B cell (primary cell): ENCODE measurements at regions of chr12 and their contacts with region 1.

Region 1: DNA sequence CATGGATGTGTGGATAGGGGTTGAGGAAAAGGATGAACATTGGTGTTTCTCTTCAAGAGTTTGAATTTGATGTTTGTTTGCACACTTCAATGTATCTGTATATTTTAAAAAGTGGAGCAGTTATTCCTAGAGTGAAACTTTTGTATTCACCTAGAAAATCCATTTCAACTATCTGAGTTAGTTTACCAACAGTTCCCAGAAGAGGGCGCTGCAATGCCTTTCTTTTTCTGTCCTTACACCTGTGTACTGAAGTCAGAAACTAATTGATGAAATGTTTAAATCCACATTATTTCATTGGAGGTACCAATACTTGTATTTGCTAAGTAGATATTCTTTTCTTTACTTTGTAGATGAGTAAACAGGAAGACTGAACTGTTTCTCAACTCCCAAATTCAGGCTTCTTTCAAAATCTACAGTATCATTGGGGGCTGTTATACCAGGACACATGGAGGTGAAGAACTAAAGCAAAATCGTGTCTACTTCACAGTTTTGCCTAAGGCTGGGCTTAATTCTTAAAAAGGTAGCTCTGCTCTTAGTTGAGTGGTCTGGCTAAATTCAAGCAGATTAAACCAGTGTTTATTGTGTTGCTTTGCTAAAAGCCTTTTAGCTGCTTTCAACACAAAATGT is 26.6 kb upstream of the KLRB1 start:
- DNase-seq: peak; percentile 86
- ATAC-seq: peak; percentile 75
- H3K4me3 ChIP-seq: no peak overlapping the region
- H3K4me3 Mint-ChIP-seq: peak overlapping the region; percentile 72
- H3K27ac ChIP-seq: peak overlapping the region; percentile 1 to 82
- H3K27ac Mint-ChIP-seq: peak overlapping the region; percentile 83
- H3K4me1 ChIP-seq: peaks cover 48 to 53% of the 10 kb centered on the region in 2 donors
- H3K4me1 Mint-ChIP-seq: peaks cover 59% of the 10 kb centered on the region
- H3K27me3 ChIP-seq: no peaks in the 10 kb centered on the region
- H3K27me3 Mint-ChIP-seq: no peaks in the 10 kb centered on the region
- CTCF ChIP-seq: peak; percentile 92

Region 2: DNA sequence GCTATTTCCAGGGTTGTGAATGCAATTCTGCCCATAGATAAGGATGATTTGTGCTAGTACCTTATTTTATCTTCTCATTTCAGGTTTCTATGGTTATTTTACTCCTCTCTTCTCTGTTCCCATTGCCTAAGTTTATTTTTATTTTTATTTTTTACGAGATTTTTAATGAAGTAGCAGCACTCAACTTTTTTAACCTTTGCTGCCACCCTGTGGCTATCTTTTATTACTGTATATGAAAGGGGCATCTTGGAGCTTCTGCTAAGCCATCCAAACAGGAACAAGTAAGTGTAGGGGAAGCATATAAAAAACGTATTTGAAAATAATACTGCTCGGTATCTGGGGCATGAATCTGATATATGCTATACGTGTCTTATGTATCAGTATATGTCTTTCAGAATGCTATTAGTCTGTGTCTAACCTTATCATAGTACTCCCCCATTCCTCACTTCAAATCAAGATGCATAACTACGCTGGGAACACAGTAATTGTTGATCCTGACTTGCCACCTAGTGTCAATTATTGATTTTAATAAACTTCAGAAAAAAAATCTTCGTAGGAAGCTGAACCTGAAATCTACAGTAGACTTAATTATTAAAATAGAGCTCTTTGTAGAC is 584.7 kb before region 1 on chr12:
- CTCF ChIA-PET with region 1: no interaction called
- POLR2A ChIA-PET with region 1: no interaction called
- intact Hi-C with region 1: no loop called
- DNase-seq: peak; percentile 53
- ATAC-seq: peak; percentile 41
- H3K4me3 ChIP-seq: no peak overlapping the region
- H3K4me3 Mint-ChIP-seq: no peak overlapping the region
- H3K27ac ChIP-seq: no peak overlapping the region
- H3K27ac Mint-ChIP-seq: no peak overlapping the region
- H3K4me1 ChIP-seq: no peaks in the 10 kb centered on the region
- H3K4me1 Mint-ChIP-seq: no peaks in the 10 kb centered on the region
- H3K27me3 ChIP-seq: no peaks in the 10 kb centered on the region
- H3K27me3 Mint-ChIP-seq: peaks cover 10% of the 10 kb centered on the region
- CTCF ChIP-seq: peak; percentile 75

Region 3: GRCh38 chr12:9391815-9392214 is 242.5 kb before region 1 on chr12:
- CTCF ChIA-PET with region 1: no interaction called
- POLR2A ChIA-PET with region 1: no interaction called
- intact Hi-C with region 1: no loop called
- DNase-seq: no peak
- ATAC-seq: no peak
- H3K4me3 ChIP-seq: no peak overlapping the region
- H3K4me3 Mint-ChIP-seq: no peak overlapping the region
- H3K27ac ChIP-seq: no peak overlapping the region
- H3K27ac Mint-ChIP-seq: no peak overlapping the region
- H3K4me1 ChIP-seq: peaks cover 17 to 21% of the 10 kb centered on the region in 2 donors
- H3K4me1 Mint-ChIP-seq: peaks cover 23% of the 10 kb centered on the region
- H3K27me3 ChIP-seq: no peaks in the 10 kb centered on the region
- H3K27me3 Mint-ChIP-seq: no peaks in the 10 kb centered on the region
- CTCF ChIP-seq: no peak

Region 4: GRCh38 chr12:9588749-9589148 is 45.5 kb before region 1 on chr12:
- CTCF ChIA-PET with region 1: no interaction called
- POLR2A ChIA-PET with region 1: no interaction called
- intact Hi-C with region 1: no loop called
- DNase-seq: peak; percentile 1
- ATAC-seq: no peak
- H3K4me3 ChIP-seq: no peak overlapping the region
- H3K4me3 Mint-ChIP-seq: no peak overlapping the region
- H3K27ac ChIP-seq: no peak overlapping the region
- H3K27ac Mint-ChIP-seq: no peak overlapping the region
- H3K4me1 ChIP-seq: no peaks in the 10 kb centered on the region
- H3K4me1 Mint-ChIP-seq: no peaks in the 10 kb centered on the region
- H3K27me3 ChIP-seq: no peaks in the 10 kb centered on the region
- H3K27me3 Mint-ChIP-seq: no peaks in the 10 kb centered on the region
- CTCF ChIP-seq: no peak

Region 5: DNA sequence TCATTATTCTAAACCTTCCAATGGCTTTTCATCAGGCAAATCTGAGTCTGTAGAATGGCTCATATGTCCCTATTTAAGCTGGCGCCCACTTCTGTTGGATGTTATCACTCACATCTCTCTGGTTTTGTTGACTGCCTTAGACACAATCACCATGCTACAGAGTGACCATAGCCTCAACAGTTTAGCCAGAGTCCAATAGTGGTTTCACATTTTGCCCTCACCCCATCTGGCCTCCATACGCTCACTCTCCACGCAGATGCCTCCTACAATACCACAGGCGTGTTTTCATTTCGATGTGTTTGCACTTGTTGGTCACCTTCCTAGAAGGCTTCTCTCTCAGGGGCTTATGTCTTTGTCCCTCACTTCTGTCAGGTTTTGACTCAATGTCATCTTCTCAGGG is 30.0 kb before region 1 on chr12:
- CTCF ChIA-PET with region 1: no interaction called
- POLR2A ChIA-PET with region 1: no interaction called
- intact Hi-C with region 1: no loop called
- DNase-seq: no peak
- ATAC-seq: no peak
- H3K4me3 ChIP-seq: no peak overlapping the region
- H3K4me3 Mint-ChIP-seq: no peak overlapping the region
- H3K27ac ChIP-seq: no peak overlapping the region
- H3K27ac Mint-ChIP-seq: no peak overlapping the region
- H3K4me1 ChIP-seq: no peaks in the 10 kb centered on the region
- H3K4me1 Mint-ChIP-seq: no peaks in the 10 kb centered on the region
- H3K27me3 ChIP-seq: no peaks in the 10 kb centered on the region
- H3K27me3 Mint-ChIP-seq: no peaks in the 10 kb centered on the region
- CTCF ChIP-seq: no peak

Region 6: GRCh38 chr12:9673404-9674225 is 39.3 kb after region 1 on chr12:
- CTCF ChIA-PET with region 1: interaction called, 20 read pairs
- POLR2A ChIA-PET with region 1: no interaction called
- intact Hi-C with region 1: loop called (anchors 1 kb)
- DNase-seq: peak; percentile 56
- ATAC-seq: peak; percentile 32
- H3K4me3 ChIP-seq: peak overlapping the region in 3 of 5 experiments; percentile 63 to 77 (median 69)
- H3K4me3 Mint-ChIP-seq: peak overlapping the region; percentile 91
- H3K27ac ChIP-seq: peak overlapping the region; percentile 28 to 87
- H3K27ac Mint-ChIP-seq: peak overlapping the region; percentile 86
- H3K4me1 ChIP-seq: peaks cover 60 to 70% of the 10 kb centered on the region in 2 donors
- H3K4me1 Mint-ChIP-seq: peaks cover 77% of the 10 kb centered on the region
- H3K27me3 ChIP-seq: no peaks in the 10 kb centered on the region
- H3K27me3 Mint-ChIP-seq: no peaks in the 10 kb centered on the region
- CTCF ChIP-seq: no peak

Region 7: DNA sequence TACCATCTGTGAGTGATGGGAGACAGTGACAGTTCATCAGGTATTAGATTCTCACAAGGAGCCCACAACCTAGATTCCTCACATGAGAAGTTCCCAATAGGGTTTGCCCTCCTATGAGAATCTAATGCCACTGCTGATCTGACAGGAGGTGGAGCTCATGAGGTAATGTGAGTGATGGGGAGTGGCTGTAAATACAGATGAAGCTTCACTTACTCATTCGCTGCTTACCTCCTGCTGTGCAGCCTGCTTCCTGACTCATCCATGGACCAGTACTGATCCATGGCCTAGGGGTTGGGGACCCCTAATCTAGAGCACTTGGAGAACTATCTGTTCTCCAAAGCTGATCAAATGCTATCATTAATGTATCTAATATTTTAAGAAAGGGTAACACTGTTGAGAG is 52.9 kb after region 1 on chr12:
- CTCF ChIA-PET with region 1: interaction called, 10 read pairs
- POLR2A ChIA-PET with region 1: no interaction called
- intact Hi-C with region 1: no loop called
- DNase-seq: no peak
- ATAC-seq: no peak
- H3K4me3 ChIP-seq: no peak overlapping the region
- H3K4me3 Mint-ChIP-seq: no peak overlapping the region
- H3K27ac ChIP-seq: peak overlapping the region in 1 of 2 donors; percentile 67
- H3K27ac Mint-ChIP-seq: no peak overlapping the region
- H3K4me1 ChIP-seq: peaks cover 33 to 44% of the 10 kb centered on the region in 2 donors
- H3K4me1 Mint-ChIP-seq: peaks cover 52% of the 10 kb centered on the region
- H3K27me3 ChIP-seq: no peaks in the 10 kb centered on the region
- H3K27me3 Mint-ChIP-seq: no peaks in the 10 kb centered on the region
- CTCF ChIP-seq: no peak

Region 8: GRCh38 chr12:9699898-9700605 is 65.8 kb after region 1 on chr12:
- CTCF ChIA-PET with region 1: interaction called, 10 read pairs
- POLR2A ChIA-PET with region 1: no interaction called
- intact Hi-C with region 1: no loop called
- DNase-seq: no peak
- ATAC-seq: no peak
- H3K4me3 ChIP-seq: no peak overlapping the region
- H3K4me3 Mint-ChIP-seq: no peak overlapping the region
- H3K27ac ChIP-seq: peak overlapping the region in 1 of 2 donors; percentile 71
- H3K27ac Mint-ChIP-seq: peak overlapping the region; percentile 71
- H3K4me1 ChIP-seq: peaks cover 38 to 42% of the 10 kb centered on the region in 2 donors
- H3K4me1 Mint-ChIP-seq: peaks cover 66% of the 10 kb centered on the region
- H3K27me3 ChIP-seq: no peaks in the 10 kb centered on the region
- H3K27me3 Mint-ChIP-seq: no peaks in the 10 kb centered on the region
- CTCF ChIP-seq: no peak